PC-3 (cell line): ENCODE measurements at regions of chr3 and their contacts with region 1.

Region 1: DNA sequence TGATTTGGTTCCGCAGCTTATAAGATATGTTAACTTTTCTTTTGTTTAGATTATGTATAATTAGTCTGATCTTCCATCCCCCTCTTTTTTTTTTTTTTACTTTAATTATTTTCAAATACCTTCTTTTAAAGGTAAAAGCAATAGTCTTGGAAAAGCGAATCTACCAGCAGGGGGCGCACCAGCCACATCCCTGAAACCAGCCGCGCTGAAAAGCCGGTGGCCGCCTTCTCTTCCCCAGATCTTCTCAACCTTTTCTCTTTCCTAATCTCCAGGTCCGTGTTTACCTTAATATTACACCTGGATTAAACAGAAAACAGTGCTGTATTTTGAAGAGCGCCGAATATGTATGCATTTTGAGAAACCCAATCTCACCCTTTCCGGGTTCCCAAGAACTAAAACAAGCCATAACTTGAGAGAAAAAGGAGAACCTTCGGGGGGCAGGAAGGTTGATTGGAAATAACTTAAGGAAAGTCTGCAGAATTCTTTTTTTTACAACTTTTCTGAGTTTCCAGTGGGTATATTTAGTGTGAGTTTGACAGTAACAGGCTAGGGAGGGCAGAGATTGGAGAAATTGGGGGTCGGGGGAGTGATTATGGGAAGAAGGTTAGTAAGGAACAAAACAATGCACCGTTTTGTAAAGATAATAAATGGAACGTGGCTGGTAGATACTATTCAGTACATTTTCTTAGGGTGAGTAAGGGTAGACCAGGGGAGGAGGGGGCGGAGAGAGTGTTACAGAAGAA is 2.0 kb upstream of the SOX2 start:
- DNase-seq: peak; percentile 80
- ATAC-seq: peak; percentile 61
- H3K4me3 ChIP-seq: peak overlapping the region; percentile 55
- H3K27ac ChIP-seq: no peak overlapping the region
- H3K4me1 ChIP-seq: peaks cover 9% of the 10 kb centered on the region; the same call in 1 of the 2 replicates
- H3K27me3 ChIP-seq: peaks cover 91% of the 10 kb centered on the region
- CTCF ChIP-seq: peak; percentile 87

Region 2: DNA sequence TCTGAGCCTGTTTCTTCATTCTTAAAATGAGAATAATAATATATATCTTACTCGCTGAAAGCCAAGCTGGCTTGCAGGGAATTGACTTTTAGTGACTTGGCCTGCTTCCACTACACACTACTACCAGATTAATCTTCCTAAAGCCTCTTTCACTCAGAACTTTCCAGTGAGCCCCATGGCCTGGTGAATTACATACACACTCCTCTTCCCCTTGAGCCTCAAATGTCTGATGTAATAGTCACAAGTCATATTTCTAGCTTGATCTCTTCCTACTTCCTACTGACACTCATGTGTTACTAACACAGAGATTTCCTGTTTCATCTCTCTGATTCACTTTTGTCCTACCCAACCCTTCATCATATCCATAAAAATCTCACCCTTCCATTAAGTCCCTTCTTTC is 80.7 kb before region 1 on chr3:
- CTCF ChIA-PET with region 1: no interaction called
- POLR2A ChIA-PET with region 1: no interaction called
- intact Hi-C with region 1: no loop called
- DNase-seq: peak; percentile 43
- ATAC-seq: no peak
- H3K4me3 ChIP-seq: no peak overlapping the region
- H3K27ac ChIP-seq: peak overlapping the region; percentile 16; the same call in 1 of the 2 replicates
- H3K4me1 ChIP-seq: peaks cover 21% of the 10 kb centered on the region
- H3K27me3 ChIP-seq: no peaks in the 10 kb centered on the region
- CTCF ChIP-seq: no peak

Region 3: DNA sequence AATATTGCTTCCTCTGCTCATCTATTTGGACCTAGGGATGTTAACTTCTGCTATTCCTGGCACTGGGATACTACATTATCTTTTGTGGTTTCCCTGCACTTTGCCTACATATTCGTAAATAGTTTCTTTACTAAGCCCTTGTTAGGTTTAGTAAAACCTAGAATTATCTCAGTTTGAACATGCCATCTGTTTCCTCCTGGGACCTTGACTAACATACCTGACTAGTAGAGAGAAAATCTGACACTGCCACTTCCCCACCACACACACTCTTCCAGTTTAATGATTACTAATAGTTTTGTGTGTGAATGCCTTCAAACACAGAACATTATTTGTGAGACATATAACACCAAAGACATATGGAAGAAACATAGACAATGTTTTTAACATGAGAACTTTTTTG is 26.1 kb before region 1 on chr3:
- CTCF ChIA-PET with region 1: no interaction called
- POLR2A ChIA-PET with region 1: no interaction called
- intact Hi-C with region 1: no loop called
- DNase-seq: no peak
- ATAC-seq: no peak
- H3K4me3 ChIP-seq: no peak overlapping the region
- H3K27ac ChIP-seq: no peak overlapping the region
- H3K4me1 ChIP-seq: no peaks in the 10 kb centered on the region
- H3K27me3 ChIP-seq: peaks cover 21% of the 10 kb centered on the region
- CTCF ChIP-seq: no peak

Region 4: GRCh38 chr3:181935907-181936306 is 226.2 kb after region 1 on chr3:
- CTCF ChIA-PET with region 1: no interaction called
- POLR2A ChIA-PET with region 1: no interaction called
- intact Hi-C with region 1: loop called (anchors 5 kb)
- DNase-seq: peak; percentile 22
- ATAC-seq: 0 out of 2 replicates have a peak, but pooled peaks have one; percentile 24
- H3K4me3 ChIP-seq: no peak overlapping the region
- H3K27ac ChIP-seq: no peak overlapping the region
- H3K4me1 ChIP-seq: no peaks in the 10 kb centered on the region
- H3K27me3 ChIP-seq: peaks cover 10% of the 10 kb centered on the region; the same call in 1 of the 2 replicates
- CTCF ChIP-seq: peak; percentile 49

Region 5: GRCh38 chr3:182027366-182027765 is 317.7 kb after region 1 on chr3:
- CTCF ChIA-PET with region 1: no interaction called
- POLR2A ChIA-PET with region 1: interaction called, 18 read pairs
- intact Hi-C with region 1: no loop called
- DNase-seq: peak; percentile 27
- ATAC-seq: no peak
- H3K4me3 ChIP-seq: no peak overlapping the region
- H3K27ac ChIP-seq: no peak overlapping the region
- H3K4me1 ChIP-seq: no peaks in the 10 kb centered on the region
- H3K27me3 ChIP-seq: peaks cover 39% of the 10 kb centered on the region
- CTCF ChIP-seq: no peak

Region 6: DNA sequence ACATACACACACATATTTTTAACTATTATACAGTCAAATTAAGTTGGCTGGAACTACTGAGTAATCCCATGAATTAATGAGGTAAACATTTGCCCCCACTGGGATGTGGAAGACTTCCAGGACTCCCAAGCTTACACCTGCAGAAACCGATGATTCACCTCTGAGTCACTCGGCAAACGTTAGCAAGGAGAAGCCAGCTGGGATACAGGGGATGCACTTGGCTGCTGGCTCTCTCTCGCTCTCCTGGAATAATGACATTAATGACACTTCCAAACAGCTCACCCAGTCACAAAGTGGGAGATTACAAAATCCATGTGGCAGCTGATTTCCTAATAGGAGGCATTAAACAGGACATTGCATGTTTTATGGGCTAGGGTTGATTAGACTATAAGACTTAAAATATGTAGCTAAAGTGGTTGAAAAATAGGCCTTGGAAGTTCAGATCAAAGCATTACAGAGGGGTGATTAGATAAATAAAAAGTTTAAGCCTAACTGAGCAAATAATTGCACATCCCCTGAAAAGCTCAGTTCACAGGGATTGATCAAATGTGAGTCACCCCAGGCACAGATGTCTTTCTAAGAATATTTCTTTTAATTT is 502.9 kb after region 1 on chr3:
- CTCF ChIA-PET with region 1: no interaction called
- POLR2A ChIA-PET with region 1: interaction called, 14 read pairs
- intact Hi-C with region 1: no loop called
- DNase-seq: peak; percentile 99
- ATAC-seq: peak; percentile 95
- H3K4me3 ChIP-seq: peak overlapping the region; percentile 10; the same call in 1 of the 2 replicates
- H3K27ac ChIP-seq: peak overlapping the region; percentile 89
- H3K4me1 ChIP-seq: peaks cover 26% of the 10 kb centered on the region
- H3K27me3 ChIP-seq: no peaks in the 10 kb centered on the region
- CTCF ChIP-seq: no peak

Region 7: DNA sequence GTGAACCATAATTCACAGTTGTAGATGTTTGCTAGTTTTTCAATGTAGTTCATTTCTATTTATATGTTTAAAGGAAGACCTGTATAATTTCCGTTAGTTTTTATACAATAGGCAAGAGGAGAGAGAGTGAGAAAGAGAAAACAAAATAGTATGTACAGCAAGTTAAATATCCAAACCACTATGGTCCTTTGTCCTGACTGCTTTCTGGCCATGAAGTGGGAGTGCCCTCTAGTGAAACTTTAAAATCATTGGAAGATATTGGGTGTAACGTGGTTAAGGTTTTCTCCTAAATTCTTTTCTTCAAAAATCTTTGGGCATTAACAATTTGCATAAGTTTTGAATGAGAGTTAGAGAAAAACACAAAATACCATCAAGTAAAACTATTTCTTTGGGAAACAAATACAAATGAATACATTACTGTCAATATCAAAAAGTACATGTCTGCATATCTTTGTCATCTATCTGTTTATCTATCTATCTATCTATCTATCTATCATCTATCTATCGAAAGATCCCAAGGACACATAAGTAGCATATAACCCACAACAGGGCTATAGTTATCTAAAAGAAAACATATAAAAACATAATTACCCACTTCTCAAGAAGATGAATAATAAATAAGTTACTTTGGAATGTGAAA is 549.0 kb after region 1 on chr3:
- CTCF ChIA-PET with region 1: interaction called, 3 read pairs
- POLR2A ChIA-PET with region 1: no interaction called
- intact Hi-C with region 1: loop called (anchors 1 kb)
- DNase-seq: peak; percentile 66
- ATAC-seq: peak; percentile 75
- H3K4me3 ChIP-seq: no peak overlapping the region
- H3K27ac ChIP-seq: no peak overlapping the region
- H3K4me1 ChIP-seq: no peaks in the 10 kb centered on the region
- H3K27me3 ChIP-seq: no peaks in the 10 kb centered on the region
- CTCF ChIP-seq: peak; percentile 87

Region 8: DNA sequence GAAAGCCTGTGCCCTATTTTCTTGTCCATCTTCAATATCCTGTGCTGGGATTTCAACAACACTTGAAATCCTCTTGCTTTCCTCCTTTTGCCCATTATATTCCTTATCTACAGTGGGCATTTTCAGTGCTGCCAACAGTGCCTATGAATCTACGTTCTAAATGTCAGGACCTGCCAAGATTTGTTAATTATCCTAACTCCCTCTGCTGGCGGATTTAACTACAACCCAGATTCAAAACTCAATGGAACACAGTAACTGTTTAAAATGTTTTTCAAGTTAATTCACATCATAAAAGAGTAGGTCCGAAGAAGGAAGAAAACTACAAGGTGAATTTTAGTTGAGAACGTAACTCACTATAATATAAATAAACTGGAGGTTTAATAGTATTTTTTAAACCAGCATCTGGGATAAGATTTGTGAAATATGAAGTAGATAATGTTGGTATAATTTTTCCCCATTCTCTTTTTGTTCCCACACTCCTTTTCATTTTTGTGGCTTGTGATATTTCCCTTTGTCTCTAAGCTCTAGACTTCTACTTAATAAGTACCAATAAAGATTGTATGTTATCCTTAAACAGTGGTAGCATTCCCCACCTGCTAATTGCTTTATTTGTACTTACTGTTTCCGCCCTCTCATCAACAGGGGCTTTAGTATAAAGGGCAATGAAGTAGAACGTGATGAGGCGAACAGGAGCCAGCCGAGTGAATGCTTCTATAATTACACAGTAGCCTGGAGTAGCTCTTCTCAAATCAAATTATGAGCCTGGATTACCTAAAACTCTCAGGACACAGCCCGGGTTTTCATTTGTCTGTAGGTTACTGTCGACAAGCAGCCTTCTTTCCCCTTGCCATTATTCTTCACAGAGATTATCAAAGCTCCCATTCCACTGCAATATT is 781.1 kb after region 1 on chr3:
- CTCF ChIA-PET with region 1: no interaction called
- POLR2A ChIA-PET with region 1: no interaction called
- intact Hi-C with region 1: loop called (anchors 1 kb)
- DNase-seq: peak; percentile 66
- ATAC-seq: peak; percentile 71
- H3K4me3 ChIP-seq: no peak overlapping the region
- H3K27ac ChIP-seq: no peak overlapping the region
- H3K4me1 ChIP-seq: peaks cover 9% of the 10 kb centered on the region; the same call in 1 of the 2 replicates
- H3K27me3 ChIP-seq: no peaks in the 10 kb centered on the region
- CTCF ChIP-seq: peak; percentile 84